Heart right ventricle (tissue), 16 donors: ENCODE measurements at regions of chr18 and their contacts with region 1.

Region 1: DNA sequence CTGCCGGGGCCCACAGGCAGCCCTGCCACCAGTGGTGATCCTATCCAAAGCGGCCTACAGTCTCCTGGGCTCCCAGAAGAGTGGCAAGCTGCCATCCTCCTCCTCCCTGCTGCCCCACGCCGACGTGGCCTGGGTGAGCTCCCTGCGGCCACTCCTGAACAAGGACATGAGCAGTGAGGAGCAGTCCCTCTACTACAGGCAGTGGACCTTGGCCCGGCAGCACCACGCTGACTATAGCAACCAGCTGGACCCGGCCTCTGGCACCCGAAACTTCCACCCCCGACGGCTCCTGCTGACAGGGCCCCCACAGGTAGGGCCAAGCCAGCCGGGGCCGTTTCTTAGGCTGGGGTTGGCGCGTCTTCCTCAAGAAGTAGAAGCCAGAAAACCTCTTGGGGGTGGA is 100.5 kb downstream of the ESCO1 start:
- DNase-seq: no peak
- ATAC-seq: no peak
- H3K4me3 ChIP-seq: no peak overlapping the region
- H3K27ac ChIP-seq: no peak overlapping the region
- H3K4me1 ChIP-seq: no peaks in the 10 kb centered on the region
- H3K27me3 ChIP-seq: no peaks in the 10 kb centered on the region
- CTCF ChIP-seq: no peak

Region 2: GRCh38 chr18:21099442-21099841 is 400.6 kb before region 1 on chr18:
- intact Hi-C with region 1: no loop called
- DNase-seq: no peak
- ATAC-seq: no peak
- H3K4me3 ChIP-seq: no peak overlapping the region
- H3K27ac ChIP-seq: no peak overlapping the region
- H3K4me1 ChIP-seq: peaks cover 0 to 68% (median 44%) of the 10 kb centered on the region in 9 donors
- H3K27me3 ChIP-seq: no peaks in the 10 kb centered on the region
- CTCF ChIP-seq: no peak

Region 3: GRCh38 chr18:21550510-21550970 is 50.5 kb after region 1 on chr18:
- intact Hi-C with region 1: loop called in 1 of 10 experiments (anchors 5 kb)
- DNase-seq: no peak
- ATAC-seq: peak in 1 of 8 donors; percentile 29
- H3K4me3 ChIP-seq: no peak overlapping the region
- H3K27ac ChIP-seq: no peak overlapping the region
- H3K4me1 ChIP-seq: no peaks in the 10 kb centered on the region
- H3K27me3 ChIP-seq: no peaks in the 10 kb centered on the region
- CTCF ChIP-seq: no peak

Region 4: DNA sequence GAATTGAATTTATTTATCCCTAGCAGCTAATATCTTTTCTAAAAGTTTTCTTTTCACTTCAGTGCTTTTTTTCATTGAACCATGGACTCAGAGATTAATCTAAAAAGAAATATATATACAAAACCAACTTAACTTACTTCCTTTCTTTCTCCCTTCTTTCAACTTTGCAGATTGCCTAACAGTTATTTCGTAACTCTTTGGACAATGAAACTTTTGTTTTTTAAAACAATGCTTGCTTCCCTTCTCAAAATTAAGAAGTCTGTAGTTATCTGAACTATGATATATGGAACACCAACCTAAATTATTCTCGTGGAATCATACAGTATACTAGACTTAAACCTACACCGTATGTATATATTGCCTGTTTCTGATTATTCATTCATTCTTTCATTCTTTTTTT is 303.5 kb after region 1 on chr18:
- intact Hi-C with region 1: no loop called
- DNase-seq: no peak
- ATAC-seq: no peak
- H3K4me3 ChIP-seq: no peak overlapping the region
- H3K27ac ChIP-seq: peak overlapping the region in 1 of 10 donors; percentile 32
- H3K4me1 ChIP-seq: peaks cover 0 to 14% (median 9%) of the 10 kb centered on the region in 9 donors
- H3K27me3 ChIP-seq: no peaks in the 10 kb centered on the region
- CTCF ChIP-seq: no peak